PC-3 (cell line): ENCODE measurements at regions of chr2 and their contacts with region 1.

Region 1: DNA sequence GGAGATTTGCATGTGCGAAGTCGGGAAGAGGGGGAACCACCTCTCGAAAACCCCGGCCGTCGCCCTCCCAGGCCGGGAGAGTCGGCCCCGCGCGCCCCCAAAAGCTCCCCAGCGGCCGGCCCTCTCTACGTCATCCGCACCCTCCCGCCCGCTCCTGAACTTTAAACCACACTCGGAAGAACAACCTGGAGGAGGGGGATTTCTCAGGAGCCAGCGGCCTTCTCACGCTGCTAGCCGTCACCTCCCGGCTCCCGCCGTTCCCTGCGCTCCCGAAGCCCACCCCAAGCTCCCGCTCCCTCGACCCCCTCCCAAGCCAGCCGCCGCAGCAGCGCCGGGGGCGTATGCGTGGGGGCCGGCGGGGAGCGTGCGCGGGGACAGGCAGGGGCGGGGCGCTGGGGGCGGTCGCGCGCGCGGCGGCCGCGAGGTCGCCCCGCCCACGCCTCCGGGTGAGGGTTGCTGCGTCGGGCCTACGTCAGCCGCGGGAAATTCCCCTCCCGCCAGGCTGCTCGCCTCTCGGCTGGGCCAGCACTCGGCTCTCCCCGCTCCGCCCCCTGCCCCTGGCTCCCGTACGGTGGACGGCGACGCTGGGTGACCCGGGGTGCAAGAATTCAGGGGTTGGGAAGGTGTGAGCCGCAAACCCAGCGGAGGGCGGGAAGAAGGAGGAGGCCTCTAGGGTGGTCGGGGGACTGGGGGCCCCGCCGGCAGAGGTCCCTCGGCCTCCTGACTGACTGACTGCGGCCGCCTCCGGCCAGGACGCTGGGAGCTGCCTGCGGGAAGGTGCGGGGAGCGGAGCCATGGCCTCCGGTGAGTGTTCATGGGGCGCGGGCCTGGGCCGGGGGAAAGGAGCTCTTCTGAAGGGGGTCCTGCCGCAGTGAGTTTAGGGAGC is at the start of gene REL:
- DNase-seq: peak; percentile 91
- ATAC-seq: peak; percentile 94
- H3K4me3 ChIP-seq: peak within 1 kb of the TSS; percentile 90
- H3K27ac ChIP-seq: peak within 1 kb of the TSS; percentile 89
- H3K4me1 ChIP-seq: peaks cover 9% of the 10 kb centered on the region
- H3K27me3 ChIP-seq: no peaks in the 10 kb centered on the region
- CTCF ChIP-seq: no peak
- total RNA-seq, gene REL: 7.3 and 8.9 TPM in 2 replicates

Region 2: GRCh38 chr2:60794277-60794863 is 86.9 kb before region 1 on chr2:
- CTCF ChIA-PET with region 1: no interaction called
- POLR2A ChIA-PET with region 1: no interaction called
- intact Hi-C with region 1: loop called (anchors 5 kb)
- DNase-seq: peak; percentile 45
- ATAC-seq: 0 out of 2 replicates have a peak, but pooled peaks have one; percentile 37
- H3K4me3 ChIP-seq: no peak overlapping the region
- H3K27ac ChIP-seq: no peak overlapping the region
- H3K4me1 ChIP-seq: no peaks in the 10 kb centered on the region
- H3K27me3 ChIP-seq: no peaks in the 10 kb centered on the region
- CTCF ChIP-seq: peak; percentile 79

Region 3: DNA sequence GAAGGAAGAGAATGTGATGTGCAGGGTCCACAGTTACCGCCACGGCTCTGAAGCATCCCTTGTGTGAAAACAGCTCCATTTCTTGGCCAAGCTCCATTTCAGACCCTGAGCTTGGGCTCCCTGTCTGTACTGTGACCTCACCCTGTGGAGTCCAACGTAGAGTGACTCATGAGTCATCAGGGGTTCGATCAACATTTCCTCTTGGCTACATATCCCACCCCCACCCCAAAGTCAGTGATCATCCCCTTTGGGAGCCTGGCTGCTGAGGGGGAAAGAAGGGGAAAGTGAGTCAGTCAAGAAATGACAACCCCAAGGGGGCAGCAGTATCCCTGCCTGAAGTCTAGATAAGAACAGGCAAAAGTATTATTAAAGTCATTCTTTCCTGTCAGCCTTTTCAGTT is 63.0 kb before region 1 on chr2:
- CTCF ChIA-PET with region 1: no interaction called
- POLR2A ChIA-PET with region 1: interaction called, 10 read pairs
- intact Hi-C with region 1: no loop called
- DNase-seq: peak; percentile 19
- ATAC-seq: no peak
- H3K4me3 ChIP-seq: no peak overlapping the region
- H3K27ac ChIP-seq: no peak overlapping the region
- H3K4me1 ChIP-seq: no peaks in the 10 kb centered on the region
- H3K27me3 ChIP-seq: 0 out of 2 replicates have a peak, but pooled peaks cover 7% of the 10 kb centered on the region
- CTCF ChIP-seq: peak; percentile 45

Region 4: DNA sequence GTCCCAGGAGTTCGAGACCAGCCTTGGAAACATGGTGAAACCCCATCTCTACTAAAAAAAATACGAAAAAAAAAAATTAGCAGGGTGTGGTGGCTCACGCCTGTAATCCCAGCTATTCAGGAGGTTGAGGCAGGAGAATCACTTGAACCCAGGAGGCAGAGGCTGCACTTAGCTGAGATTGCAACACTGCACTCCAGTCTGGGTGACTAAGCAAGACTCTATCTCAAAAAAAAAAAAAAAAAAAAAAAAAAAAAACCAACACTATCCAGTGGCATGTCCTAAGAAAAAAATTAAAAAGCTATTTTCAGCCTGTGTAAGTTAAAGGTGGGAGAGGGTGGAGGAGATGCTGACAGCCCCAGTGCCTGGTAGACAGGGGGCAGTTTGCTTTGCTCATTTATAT is 32.1 kb before region 1 on chr2:
- CTCF ChIA-PET with region 1: no interaction called
- POLR2A ChIA-PET with region 1: interaction called, 10 read pairs
- intact Hi-C with region 1: no loop called
- DNase-seq: no peak
- ATAC-seq: no peak
- H3K4me3 ChIP-seq: no peak overlapping the region
- H3K27ac ChIP-seq: no peak overlapping the region
- H3K4me1 ChIP-seq: no peaks in the 10 kb centered on the region
- H3K27me3 ChIP-seq: no peaks in the 10 kb centered on the region
- CTCF ChIP-seq: no peak

Region 5: DNA sequence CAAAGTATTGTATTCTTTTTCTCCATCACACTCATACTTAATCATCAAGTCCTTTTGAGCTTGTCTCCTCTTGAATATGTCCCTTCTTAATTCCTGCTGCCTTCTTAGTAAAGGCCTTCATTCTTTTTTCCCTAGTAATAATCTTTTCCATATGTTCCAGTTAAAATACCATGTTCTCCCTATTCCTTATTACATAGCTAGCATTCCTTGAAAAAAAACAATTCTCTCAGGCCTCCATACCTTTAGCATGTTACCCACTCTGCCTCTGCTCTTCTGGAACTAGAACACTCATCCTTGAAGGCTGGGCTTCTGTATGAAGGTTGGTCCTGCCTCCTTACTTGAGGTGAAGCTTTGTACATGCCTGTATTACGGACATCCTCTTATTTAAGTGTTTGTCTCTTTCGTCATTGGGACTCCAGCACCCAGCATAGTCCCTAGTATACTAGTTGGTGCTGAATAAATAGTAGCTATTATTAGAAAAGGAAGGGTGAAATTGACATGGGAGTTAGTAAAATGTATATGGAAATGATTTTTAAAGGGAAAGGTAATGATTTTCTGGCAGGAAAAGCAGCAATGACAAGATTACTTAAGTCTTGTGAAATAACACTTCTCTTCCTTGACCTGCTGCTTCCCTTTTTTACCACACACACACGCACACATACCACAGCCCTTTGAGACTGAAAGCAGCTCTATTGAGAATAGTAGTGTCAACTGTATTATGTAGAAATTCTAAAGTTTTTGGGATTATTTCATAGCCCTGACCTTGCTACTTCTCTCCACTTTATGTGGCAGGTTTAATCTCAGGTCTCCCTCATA is 45.7 kb after region 1 on chr2:
- CTCF ChIA-PET with region 1: no interaction called
- POLR2A ChIA-PET with region 1: no interaction called
- intact Hi-C with region 1: loop called (anchors 5 kb)
- DNase-seq: no peak
- ATAC-seq: no peak
- H3K4me3 ChIP-seq: no peak overlapping the region
- H3K27ac ChIP-seq: no peak overlapping the region
- H3K4me1 ChIP-seq: peaks cover 9% of the 10 kb centered on the region
- H3K27me3 ChIP-seq: no peaks in the 10 kb centered on the region
- CTCF ChIP-seq: no peak

Region 6: DNA sequence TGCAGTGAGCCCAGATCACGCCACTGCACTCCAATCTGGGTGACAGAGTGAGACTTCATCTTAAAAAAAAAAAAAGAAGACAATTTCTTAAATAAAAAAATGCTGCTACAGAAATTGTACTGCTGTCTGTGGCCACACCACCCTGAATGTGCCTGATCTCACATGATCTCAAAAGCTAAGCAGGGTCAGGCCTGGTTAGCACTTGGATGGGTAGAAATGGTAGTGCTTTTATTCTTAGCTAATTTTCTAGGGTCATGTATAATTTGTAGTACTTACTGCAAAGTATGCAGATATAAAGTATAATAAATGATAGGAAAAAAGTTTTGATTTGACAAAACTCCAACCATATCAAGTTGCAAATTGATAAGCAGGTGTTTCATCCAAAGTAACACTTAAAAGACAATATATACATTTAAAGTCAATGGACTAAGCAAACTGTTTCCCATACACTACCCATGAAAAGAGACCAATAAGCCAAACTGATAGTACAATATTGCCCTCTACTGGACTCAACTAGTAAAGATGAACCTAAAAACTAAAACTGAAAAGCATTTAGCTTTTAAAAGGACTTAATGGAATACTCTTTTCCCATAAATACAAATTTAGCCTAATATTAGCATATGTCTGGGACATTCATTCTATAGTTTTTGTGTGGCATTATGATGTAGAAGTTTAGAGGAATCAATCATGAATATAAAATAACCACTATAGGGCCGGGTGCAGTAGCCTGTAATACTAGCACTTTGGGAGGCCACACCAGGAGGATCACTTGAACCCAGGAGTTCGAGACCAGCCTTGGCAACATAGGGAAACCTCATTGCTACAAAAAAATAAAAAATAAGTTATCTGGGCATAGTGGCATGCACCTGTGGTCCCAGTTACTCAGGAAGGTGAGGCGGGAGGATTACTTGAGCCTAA is 117.6 kb after region 1 on chr2:
- CTCF ChIA-PET with region 1: no interaction called
- POLR2A ChIA-PET with region 1: no interaction called
- intact Hi-C with region 1: loop called (anchors 5 kb)
- DNase-seq: peak; percentile 78
- ATAC-seq: peak; percentile 64
- H3K4me3 ChIP-seq: no peak overlapping the region
- H3K27ac ChIP-seq: no peak overlapping the region
- H3K4me1 ChIP-seq: 0 out of 2 replicates have a peak, but pooled peaks cover 1% of the 10 kb centered on the region
- H3K27me3 ChIP-seq: no peaks in the 10 kb centered on the region
- CTCF ChIP-seq: peak; percentile 80

Region 7: DNA sequence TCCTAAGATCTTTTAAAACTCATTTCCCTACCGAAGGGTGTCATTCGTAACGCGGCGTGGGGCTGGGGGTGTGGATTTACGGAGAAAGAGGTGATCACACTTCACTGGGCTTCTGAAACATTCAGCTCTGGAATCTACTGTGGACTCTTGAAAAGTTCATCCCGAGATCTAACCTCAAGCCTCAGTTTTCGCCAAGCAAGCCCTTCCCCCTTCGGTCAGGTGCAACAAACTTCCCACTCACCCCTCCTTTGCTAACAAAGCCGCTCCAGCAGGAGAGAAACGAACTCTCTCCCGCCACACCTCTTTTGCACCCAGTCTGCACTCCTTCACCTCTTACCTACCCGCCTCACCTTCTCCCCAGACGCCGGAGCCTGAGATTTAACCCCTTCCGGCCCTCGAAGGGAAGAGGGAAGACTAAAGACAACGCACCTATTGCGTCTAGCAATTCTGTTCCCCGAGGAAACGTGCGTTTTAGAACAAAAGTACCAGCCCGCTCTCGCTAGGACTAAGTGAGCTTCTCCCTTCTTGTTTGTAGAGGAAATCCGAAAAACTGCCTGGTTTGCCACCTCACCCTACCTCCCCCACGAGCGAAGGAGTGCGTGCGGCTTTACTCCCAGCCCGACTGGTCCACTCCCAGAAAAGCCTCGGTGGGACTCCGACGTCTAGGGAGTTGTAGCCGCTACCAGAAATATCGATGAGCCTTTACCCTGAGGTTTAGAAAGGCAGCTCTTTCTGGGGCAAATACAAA is 135.7 kb after region 1 on chr2:
- CTCF ChIA-PET with region 1: no interaction called
- POLR2A ChIA-PET with region 1: no interaction called
- intact Hi-C with region 1: loop called (anchors 5 kb)
- DNase-seq: peak; percentile 91
- ATAC-seq: peak; percentile 58
- H3K4me3 ChIP-seq: peak overlapping the region; percentile 95
- H3K27ac ChIP-seq: peak overlapping the region; percentile 97
- H3K4me1 ChIP-seq: peaks cover 38% of the 10 kb centered on the region
- H3K27me3 ChIP-seq: no peaks in the 10 kb centered on the region
- CTCF ChIP-seq: no peak